AG04449 (cell line): ENCODE measurements at regions of chr13 and their contacts with region 1.

Region 1: DNA sequence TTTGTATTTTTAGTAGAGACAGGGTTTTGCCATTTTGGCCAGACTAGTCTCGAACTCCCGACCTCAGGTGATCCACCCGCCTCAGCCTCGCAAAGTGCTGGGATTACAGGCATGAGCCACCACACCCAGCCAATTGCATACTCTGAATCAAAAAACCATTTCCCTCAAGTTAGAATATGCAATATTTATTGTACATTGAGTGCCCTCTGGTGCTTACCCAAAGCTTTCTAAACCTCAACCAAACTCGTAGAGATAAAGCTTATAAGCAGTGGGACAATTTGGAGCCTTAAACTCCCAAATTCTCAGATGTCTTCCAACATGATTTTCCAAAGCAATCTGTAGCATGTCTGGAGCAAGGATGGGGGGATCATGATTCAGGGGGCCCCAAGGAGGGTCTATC is 22.4 kb downstream of the RFXAP start:
- DNase-seq: no peak
- H3K4me3 ChIP-seq: no peak overlapping the region
- CTCF ChIP-seq: no peak

Region 2: GRCh38 chr13:36420437-36420891 is 420.9 kb before region 1 on chr13:
- CTCF ChIA-PET with region 1: interaction called, 37 read pairs
- POLR2A ChIA-PET with region 1: no interaction called
- DNase-seq: no peak
- H3K4me3 ChIP-seq: no peak overlapping the region
- CTCF ChIP-seq: peak; percentile 76

Region 3: DNA sequence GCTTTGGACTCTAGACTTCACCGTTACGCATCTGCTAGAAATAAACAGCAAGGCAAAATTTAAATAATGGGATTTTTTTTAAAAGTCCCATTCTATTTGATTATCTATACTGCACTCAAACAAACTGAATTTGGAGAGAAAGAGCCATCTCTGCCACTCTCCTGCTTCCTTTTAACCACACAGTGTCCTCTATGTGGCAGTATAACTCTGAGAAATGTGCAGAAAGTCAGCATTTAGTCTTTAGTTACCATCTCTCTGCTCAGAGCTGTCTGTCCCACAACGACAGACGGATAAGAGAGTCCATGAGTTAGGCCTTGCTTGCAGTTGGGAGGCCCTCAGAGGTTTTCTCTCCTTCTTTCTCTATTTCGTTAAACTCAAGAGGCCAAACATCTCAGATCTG is 387.9 kb before region 1 on chr13:
- CTCF ChIA-PET with region 1: interaction called, 25 read pairs
- POLR2A ChIA-PET with region 1: no interaction called
- DNase-seq: no peak
- H3K4me3 ChIP-seq: no peak overlapping the region
- CTCF ChIP-seq: peak; percentile 24